Caco-2 (cell line): ENCODE measurements at regions of chr11 and their contacts with region 1.

Region 1: DNA sequence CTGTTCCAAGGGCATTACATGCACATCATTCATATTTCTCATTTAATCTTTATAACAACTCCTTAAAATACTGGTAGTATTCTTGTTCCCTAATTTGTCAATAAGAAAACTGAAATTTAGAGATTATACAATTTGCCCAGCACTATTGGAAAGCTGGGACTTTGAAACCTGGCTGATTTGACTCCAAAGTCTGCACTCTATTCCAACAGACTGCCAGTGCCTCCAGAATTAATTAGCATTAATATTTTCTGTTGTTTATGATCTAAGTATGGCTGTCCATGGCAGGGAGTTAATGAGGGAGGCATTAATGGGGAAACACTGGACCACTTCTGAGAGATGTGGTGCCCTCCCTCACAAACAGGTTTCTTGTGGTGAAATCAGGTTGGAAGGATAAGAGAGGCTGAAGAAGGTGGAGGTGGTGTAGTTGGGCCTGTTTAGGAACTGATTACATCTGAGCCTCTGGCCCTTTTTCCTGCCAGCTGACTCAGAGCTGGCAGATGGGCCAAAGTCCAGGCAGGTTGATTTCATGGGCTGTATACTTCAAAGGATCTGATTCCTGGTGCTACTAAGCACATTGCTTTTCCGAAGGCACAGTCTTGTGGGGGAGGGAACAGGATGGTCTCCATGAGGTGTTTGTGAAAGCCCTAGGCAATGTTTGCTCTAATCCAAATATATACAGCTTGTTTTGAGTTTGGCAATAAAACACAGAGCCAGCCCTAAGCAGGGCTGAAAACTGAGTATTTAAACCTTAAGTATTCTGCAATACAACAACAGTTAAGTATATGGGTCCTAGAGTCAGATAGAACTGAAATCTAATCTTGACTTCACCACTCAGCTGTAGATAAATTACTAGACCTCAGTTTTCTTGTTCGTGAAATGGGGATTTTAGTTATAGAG is 21.0 kb upstream of the RAB30 start:
- DNase-seq: peak; percentile 95 to 96
- H3K4me3 ChIP-seq: no peak overlapping the region
- H3K4me3 Mint-ChIP-seq: peak overlapping the region; percentile 21
- H3K27ac Mint-ChIP-seq: peak overlapping the region; percentile 55
- H3K4me1 ChIP-seq: peaks cover 43% of the 10 kb centered on the region
- H3K4me1 Mint-ChIP-seq: peaks cover 65% of the 10 kb centered on the region
- H3K27me3 ChIP-seq: no peaks in the 10 kb centered on the region
- H3K27me3 Mint-ChIP-seq: no peaks in the 10 kb centered on the region
- CTCF ChIP-seq: no peak

Region 2: DNA sequence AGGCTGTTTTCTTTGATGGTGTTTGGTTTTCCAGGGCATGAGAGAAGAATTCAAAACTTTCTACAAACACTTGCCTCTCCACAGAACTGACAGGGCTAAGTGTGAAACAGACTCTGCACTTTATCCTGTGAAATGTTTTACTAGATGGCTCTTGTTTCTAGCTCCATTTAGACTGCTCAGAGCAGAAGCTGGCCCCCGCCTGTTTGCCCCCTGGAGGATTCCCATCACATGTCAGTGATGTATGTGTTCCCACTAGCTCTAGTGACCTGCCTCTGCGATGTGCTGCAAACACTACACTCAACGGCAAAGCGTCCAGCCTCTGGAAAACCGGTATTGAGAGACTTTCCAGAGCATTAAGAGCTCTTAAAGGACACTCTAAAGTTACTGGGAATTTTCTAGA is 22.8 kb after region 1 on chr11:
- CTCF ChIA-PET with region 1: interaction called, 5 read pairs
- POLR2A ChIA-PET with region 1: interaction called, 9 read pairs
- intact Hi-C with region 1: loop called (anchors 1 kb)
- DNase-seq: peak in 1 of 2 experiments; percentile 24
- H3K4me3 ChIP-seq: no peak overlapping the region
- H3K4me3 Mint-ChIP-seq: no peak overlapping the region
- H3K27ac Mint-ChIP-seq: no peak overlapping the region
- H3K4me1 ChIP-seq: no peaks in the 10 kb centered on the region; the same call in 1 of the 2 replicates
- H3K4me1 Mint-ChIP-seq: peaks cover 6% of the 10 kb centered on the region
- H3K27me3 ChIP-seq: no peaks in the 10 kb centered on the region
- H3K27me3 Mint-ChIP-seq: no peaks in the 10 kb centered on the region
- CTCF ChIP-seq: peak in 1 of 2 experiments; percentile 36

Region 3: GRCh38 chr11:83140696-83141455 is 48.1 kb after region 1 on chr11:
- CTCF ChIA-PET with region 1: interaction called, 3 read pairs
- POLR2A ChIA-PET with region 1: no interaction called
- intact Hi-C with region 1: loop called (anchors 1 kb)
- DNase-seq: peak; percentile 75 to 79
- H3K4me3 ChIP-seq: no peak overlapping the region
- H3K4me3 Mint-ChIP-seq: peak overlapping the region; percentile 4
- H3K27ac Mint-ChIP-seq: peak overlapping the region; percentile 57
- H3K4me1 ChIP-seq: peaks cover 18% of the 10 kb centered on the region
- H3K4me1 Mint-ChIP-seq: peaks cover 13% of the 10 kb centered on the region
- H3K27me3 ChIP-seq: no peaks in the 10 kb centered on the region
- H3K27me3 Mint-ChIP-seq: no peaks in the 10 kb centered on the region
- CTCF ChIP-seq: no peak

Region 4: GRCh38 chr11:83193315-83194280 is 100.9 kb after region 1 on chr11 and contains the start of gene ANKRD42:
- CTCF ChIA-PET with region 1: interaction called, 4 read pairs
- POLR2A ChIA-PET with region 1: interaction called, 3 read pairs
- intact Hi-C with region 1: loop called (anchors 1 kb)
- DNase-seq: peak; percentile 96 to 97
- H3K4me3 ChIP-seq: peak within 1 kb of the TSS; percentile 77
- H3K4me3 Mint-ChIP-seq: peak within 1 kb of the TSS; percentile 80
- H3K27ac Mint-ChIP-seq: peak within 1 kb of the TSS; percentile 89
- H3K4me1 ChIP-seq: peaks cover 7% of the 10 kb centered on the region; the same call in 1 of the 2 replicates
- H3K4me1 Mint-ChIP-seq: peaks cover 30% of the 10 kb centered on the region
- H3K27me3 ChIP-seq: no peaks in the 10 kb centered on the region
- H3K27me3 Mint-ChIP-seq: no peaks in the 10 kb centered on the region
- CTCF ChIP-seq: peak in 1 of 2 experiments; percentile 4
- total RNA-seq, gene ANKRD42: 8.3 and 9.0 TPM in 2 replicates

Region 5: DNA sequence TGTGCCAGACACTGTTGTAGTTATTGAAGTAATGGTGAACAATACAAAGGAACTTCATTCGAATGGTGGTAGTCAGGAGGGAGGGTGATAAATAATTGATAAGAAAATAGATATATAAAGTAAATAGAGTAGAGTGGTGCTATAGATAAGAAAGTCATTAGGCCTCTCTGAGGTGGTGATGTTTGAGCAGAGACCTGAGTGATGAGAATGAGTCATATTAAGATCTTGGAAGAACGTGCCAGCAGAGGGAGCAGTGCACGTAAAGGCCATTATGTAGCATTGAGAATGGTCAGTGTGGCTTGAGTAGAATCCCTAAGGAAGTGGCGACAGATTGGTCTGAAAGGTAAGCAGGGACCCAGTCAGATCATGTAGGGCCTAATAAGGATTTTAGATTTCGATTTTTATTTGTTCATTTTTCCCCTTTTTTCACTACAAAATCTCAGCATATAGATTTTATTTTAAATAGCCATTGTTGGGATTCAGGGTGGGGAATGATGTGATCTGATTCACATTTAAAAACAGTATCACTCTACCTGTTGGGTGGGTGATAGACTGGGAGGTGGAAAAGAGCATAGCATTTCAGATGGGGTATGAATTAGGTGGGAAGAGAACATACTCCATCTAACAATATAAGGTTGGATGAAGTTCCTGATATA is 148.7 kb after region 1 on chr11:
- CTCF ChIA-PET with region 1: no interaction called
- POLR2A ChIA-PET with region 1: no interaction called
- intact Hi-C with region 1: loop called (anchors 2 kb)
- DNase-seq: peak; percentile 86
- H3K4me3 ChIP-seq: no peak overlapping the region
- H3K4me3 Mint-ChIP-seq: no peak overlapping the region
- H3K27ac Mint-ChIP-seq: no peak overlapping the region
- H3K4me1 ChIP-seq: peaks cover 9% of the 10 kb centered on the region
- H3K4me1 Mint-ChIP-seq: peaks cover 21% of the 10 kb centered on the region
- H3K27me3 ChIP-seq: no peaks in the 10 kb centered on the region
- H3K27me3 Mint-ChIP-seq: no peaks in the 10 kb centered on the region
- CTCF ChIP-seq: peak; percentile 86 to 92

Region 6: DNA sequence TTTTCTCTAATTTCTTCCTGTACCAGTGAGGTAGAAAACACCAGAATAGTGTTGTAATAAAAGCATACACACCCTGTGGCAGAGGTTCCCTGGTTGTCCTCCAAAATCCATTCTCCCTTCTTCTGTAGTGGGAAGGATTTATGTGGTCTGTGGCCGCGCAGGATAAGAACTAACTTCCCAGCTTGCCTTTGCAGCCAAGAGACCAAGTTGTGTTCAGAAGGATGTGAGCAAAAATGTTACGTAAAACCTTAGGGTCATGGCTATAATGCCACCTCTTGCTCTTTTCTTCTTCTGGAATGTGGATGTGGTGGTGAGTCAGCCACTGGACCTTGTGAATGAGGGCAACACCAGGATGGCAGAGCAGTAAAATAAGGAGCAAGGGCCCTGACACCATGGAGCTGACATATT is 165.0 kb after region 1 on chr11:
- CTCF ChIA-PET with region 1: no interaction called
- POLR2A ChIA-PET with region 1: no interaction called
- intact Hi-C with region 1: loop called (anchors 2 kb)
- DNase-seq: peak in 1 of 2 experiments; percentile 63
- H3K4me3 ChIP-seq: no peak overlapping the region
- H3K4me3 Mint-ChIP-seq: no peak overlapping the region
- H3K27ac Mint-ChIP-seq: peak overlapping the region; percentile 87
- H3K4me1 ChIP-seq: peaks cover 43% of the 10 kb centered on the region
- H3K4me1 Mint-ChIP-seq: peaks cover 32% of the 10 kb centered on the region
- H3K27me3 ChIP-seq: no peaks in the 10 kb centered on the region
- H3K27me3 Mint-ChIP-seq: no peaks in the 10 kb centered on the region
- CTCF ChIP-seq: no peak

Region 7: DNA sequence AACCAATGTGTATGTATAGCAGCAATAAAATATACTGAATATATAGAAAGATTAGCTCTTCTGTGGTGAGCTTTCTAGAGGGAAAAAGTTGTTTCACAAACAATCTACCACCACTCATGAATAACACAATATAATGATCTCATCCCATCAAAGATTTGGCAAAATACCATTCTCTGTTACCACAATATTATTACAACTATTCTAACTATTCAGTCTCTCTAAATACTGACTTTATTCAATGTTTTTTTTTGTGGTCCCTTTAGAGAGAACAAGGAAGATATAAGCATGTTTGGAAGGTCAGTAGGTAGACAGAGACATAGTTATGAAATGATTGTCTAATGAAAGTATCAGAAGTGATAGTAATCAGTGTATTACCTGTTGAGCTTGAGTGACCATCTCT is 185.6 kb after region 1 on chr11:
- CTCF ChIA-PET with region 1: no interaction called
- POLR2A ChIA-PET with region 1: no interaction called
- intact Hi-C with region 1: no loop called
- DNase-seq: no peak
- H3K4me3 ChIP-seq: no peak overlapping the region
- H3K4me3 Mint-ChIP-seq: no peak overlapping the region
- H3K27ac Mint-ChIP-seq: no peak overlapping the region
- H3K4me1 ChIP-seq: peaks cover 9% of the 10 kb centered on the region; the same call in 1 of the 2 replicates
- H3K4me1 Mint-ChIP-seq: peaks cover 14% of the 10 kb centered on the region
- H3K27me3 ChIP-seq: no peaks in the 10 kb centered on the region
- H3K27me3 Mint-ChIP-seq: no peaks in the 10 kb centered on the region
- CTCF ChIP-seq: no peak